ENCODE measurements at regions of chr1 and their contacts with region 1.

Region 1: DNA sequence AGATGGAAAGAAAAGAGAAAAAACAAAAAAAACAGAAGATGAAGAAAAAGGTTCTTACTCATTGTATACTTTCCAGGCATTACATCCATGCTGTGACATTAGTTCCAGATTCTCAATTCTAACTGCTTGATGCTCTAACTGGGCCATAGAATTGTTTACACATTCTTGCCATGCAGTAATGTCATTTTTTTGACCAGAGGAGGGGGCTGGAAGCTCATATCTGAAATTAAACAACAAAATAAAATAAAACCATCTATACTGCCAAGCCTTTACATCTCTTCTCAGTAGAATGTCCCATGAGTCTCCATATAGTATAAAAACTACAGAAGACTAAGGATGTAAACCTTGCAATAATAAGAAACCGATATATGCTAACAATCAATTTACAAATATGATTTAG is 5.9 kb downstream of the BCAS2 start:
- DNase-seq: no peak
- H3K4me3 ChIP-seq: no peak overlapping the region
- H3K27ac ChIP-seq: no peak overlapping the region
- H3K4me1 ChIP-seq: peaks cover 7% of the 10 kb centered on the region
- CTCF ChIP-seq: 0 out of 2 replicates have a peak, but pooled peaks have one; percentile 17

Region 2: DNA sequence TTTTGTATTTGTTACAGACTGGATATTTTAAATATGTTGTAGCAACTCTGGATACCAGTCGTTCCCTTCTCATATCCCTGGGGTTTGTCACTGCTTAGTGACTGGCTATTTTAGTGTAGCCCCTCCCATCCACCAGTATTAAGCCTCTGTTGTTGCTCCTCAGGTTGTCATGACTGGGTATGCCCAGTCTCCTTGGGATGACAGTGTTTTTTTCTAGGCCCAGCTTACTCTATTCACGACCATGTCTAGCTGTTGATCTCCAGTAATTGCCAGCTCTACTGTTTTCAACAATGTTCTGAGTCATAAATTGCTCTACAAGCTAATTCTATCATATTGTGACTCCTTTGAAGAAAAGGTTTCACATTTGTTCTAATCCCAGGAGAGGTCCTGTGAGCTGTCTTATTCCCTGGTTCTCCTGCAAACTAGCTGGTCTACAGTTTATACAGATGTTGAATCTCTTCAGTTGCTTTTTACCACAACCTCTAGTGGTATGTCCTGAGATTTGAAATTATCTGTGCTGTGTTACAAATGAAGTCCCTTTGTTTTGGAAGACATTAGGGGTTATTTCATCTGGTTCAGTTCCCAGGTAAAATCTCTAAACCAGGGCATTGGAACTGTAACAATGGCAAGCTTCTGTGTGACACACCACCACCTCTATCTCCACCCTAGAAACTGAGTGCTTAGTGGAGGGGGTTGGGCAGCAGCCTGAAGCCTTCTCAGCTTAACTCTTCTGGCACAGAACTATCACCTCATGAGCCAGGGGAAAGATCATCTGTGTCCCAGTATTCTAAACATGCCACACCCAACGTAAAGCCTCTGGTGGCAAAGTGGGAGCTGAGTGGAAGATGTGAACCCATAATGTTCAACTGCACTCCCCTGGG is 189.2 kb before region 1 on chr1:
- CTCF ChIA-PET with region 1: no interaction called
- POLR2A ChIA-PET with region 1: no interaction called
- intact Hi-C with region 1: no loop called
- DNase-seq: no peak
- H3K4me3 ChIP-seq: no peak overlapping the region
- H3K27ac ChIP-seq: no peak overlapping the region
- H3K4me1 ChIP-seq: no peaks in the 10 kb centered on the region
- CTCF ChIP-seq: no peak

Region 3: GRCh38 chr1:114670083-114671010 is 94.8 kb after region 1 on chr1:
- CTCF ChIA-PET with region 1: no interaction called
- POLR2A ChIA-PET with region 1: interaction called, 3 read pairs
- intact Hi-C with region 1: loop called (anchors 10 kb)
- DNase-seq: peak; percentile 86
- H3K4me3 ChIP-seq: peak overlapping the region; percentile 72
- H3K27ac ChIP-seq: no peak overlapping the region
- H3K4me1 ChIP-seq: peaks cover 4% of the 10 kb centered on the region
- CTCF ChIP-seq: no peak

Region 4: DNA sequence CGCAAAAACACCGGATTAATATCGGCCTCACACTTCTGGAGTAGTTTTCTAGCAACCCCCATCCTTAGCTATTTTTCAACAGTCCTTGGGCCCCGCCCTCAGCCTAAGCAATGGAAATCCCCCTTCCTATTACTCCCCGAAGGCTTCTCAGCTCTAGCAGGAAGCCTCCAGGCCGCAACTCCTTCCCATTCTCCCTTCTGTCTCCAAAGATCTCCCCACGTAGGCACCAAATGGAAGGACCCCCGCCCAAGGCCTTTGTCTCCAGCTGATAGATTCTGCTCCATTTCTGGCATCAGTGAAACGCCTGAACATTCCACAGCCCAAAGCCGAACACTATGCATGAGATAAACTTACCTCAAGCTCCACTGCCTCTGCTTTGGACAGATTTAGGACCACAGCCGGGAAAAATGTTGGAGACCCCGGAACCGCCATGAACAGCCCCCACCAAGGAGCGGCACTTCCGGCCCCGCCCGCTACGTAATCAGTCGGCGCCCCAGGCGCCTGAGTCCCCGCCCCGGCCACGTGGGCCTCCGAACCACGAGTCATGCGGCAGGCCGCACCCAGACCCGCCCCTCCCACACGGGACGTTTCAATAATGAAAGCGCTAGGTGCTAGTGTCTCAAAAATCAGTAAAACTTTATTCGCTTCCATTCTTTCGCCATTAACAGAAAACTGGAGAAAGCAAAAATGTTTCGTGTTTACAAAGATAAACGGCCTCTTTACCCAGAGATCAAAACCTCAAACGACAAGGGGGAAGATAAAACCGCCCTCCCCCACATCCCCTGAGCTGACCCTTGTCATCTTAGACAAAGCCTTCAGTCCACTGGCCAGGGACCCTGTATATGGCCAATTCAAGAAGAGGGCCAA is 141.0 kb after region 1 on chr1 and contains the start of gene NRAS:
- CTCF ChIA-PET with region 1: no interaction called
- POLR2A ChIA-PET with region 1: interaction called, 3 read pairs
- intact Hi-C with region 1: loop called (anchors 10 kb)
- DNase-seq: peak; percentile 94
- H3K4me3 ChIP-seq: peak within 1 kb of the TSS; percentile 87
- H3K27ac ChIP-seq: peak within 1 kb of the TSS; percentile 54
- H3K4me1 ChIP-seq: peaks cover 16% of the 10 kb centered on the region
- CTCF ChIP-seq: no peak
- total RNA-seq, gene NRAS: 28.5 and 32.6 TPM in 2 replicates

Region 5: DNA sequence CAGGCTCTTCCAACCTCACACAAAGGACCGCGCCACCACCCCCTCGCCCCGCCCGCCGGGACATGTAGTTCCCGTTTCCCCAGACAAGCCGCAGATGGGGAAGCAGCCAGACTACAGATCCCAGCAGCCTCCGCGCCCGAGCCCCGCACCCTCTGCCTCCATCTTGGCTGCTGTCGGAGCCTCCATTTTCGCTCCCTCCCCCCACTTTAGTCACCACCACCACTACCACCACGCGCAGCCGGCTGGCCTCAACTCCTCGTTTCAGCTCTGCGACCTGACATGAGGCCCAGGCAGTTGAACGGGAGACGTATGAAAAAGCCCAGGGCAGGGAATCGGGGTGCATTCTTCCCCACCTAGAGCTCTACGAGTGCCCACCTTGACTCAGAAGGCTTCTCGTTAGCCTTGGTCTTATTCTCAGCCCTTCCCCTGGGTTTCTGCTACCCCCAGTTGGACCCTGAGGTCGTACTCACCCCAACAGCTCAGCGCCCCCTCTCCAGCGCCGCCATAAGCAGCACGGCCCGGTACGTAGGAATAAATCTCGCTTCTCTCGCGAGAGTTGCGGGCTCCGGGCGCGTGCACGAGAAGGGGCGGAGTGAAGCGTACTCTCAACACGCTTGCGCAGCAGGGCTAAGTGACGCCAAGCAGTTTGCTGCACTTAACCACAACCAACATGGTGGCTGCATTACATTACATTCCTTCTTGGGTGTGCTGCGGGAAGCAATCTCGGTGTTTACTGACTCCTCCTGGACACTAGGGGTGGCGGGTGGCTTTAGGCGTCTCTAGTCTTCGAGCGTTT is 182.1 kb after region 1 on chr1 and contains the start of gene CSDE1:
- CTCF ChIA-PET with region 1: no interaction called
- POLR2A ChIA-PET with region 1: interaction called, 3 read pairs
- intact Hi-C with region 1: loop called (anchors 10 kb)
- DNase-seq: peak; percentile 99
- H3K4me3 ChIP-seq: peak within 1 kb of the TSS; percentile 90
- H3K27ac ChIP-seq: peak within 1 kb of the TSS; percentile 84
- H3K4me1 ChIP-seq: peaks cover 40% of the 10 kb centered on the region
- CTCF ChIP-seq: peak; percentile 69
- total RNA-seq, gene CSDE1: 177 and 223 TPM in 2 replicates

Measured in OCI-LY7 (cell line).